ENCODE measurements at regions of chr3 and their contacts with region 1.

Region 1: DNA sequence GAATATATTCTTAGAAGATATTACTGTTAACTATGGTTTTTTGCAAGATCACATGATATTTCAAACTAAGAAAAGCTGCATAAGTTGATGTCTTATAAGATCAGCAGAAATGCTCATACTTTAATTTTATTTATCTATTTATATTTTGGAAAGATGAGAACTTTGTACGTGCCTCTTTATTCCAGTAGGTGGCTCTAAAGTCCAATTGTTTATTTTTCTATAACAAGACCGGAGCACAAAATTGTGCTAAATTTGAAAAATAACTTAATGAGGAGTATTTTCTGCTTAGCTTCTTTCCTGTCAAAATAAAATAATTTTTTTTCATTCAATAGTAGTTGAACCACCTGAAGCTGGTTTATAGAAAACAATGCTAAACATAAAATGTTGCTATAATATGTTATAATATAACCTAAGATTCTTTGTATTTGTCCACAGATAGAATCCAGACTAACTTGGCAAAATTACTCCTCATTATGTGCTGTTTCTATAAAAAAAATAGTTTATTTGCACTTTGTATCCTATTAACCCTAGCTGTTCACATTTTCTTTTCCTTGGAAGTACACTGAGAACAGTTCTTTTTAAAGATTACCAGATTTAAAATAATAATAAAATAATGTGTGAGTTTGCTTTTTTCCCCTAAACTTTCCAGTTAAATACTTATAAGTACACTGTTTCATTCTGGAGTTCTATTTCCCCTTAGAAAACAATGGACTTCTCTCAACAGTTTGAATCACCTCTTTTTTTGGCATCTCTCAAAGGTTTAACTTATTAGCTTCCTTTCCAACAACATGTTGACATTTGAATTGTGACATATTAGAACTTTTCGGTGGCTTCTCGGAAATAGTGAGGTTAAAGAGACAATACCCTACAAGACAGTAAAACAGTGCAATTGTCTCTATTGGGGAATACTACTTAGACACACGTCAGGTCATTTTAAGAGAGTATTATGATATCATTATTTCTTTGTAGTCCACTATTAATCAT is 530.0 kb downstream of the MECOM start:
- DNase-seq: peak; percentile 33
- H3K4me3 Mint-ChIP-seq: no peak overlapping the region
- H3K27ac Mint-ChIP-seq: peak overlapping the region; percentile 6
- H3K4me1 Mint-ChIP-seq: peaks cover 5% of the 10 kb centered on the region
- H3K27me3 Mint-ChIP-seq: no peaks in the 10 kb centered on the region
- CTCF ChIP-seq: peak; percentile 49

Region 2: DNA sequence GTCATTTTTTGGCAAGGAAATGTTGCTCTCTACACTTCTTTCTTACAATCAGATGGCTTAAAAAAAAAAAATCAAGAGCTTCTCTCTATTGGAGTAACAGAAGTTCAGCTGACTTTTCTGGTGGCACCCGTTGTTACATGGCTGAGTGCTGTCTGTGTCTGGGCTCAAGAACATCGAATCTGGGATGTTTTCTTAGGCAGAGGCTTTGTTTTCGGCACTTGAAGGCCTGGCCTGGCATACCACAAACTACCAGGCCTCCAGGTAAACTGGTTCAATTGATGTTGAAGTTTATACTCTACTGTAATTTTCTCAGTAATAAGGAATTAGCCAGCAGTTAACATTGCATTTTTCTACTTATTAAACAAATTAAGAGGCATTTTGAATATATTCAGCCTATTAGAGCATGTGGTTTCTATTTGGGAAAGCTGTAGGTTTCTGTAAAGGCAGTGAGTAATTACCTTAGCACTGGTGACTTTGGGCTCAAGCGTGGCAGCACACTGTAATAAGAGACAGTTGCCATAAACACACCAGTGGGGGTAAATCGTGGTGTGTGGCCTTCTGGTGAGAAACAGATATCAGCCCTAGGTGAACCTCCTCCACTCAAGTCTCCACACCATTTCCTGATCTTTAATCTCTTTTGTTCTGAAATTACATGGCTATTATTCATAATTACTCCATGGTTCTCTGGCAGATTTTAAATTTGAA is 14.7 kb before region 1 on chr3:
- CTCF ChIA-PET with region 1: interaction called, 12 read pairs
- POLR2A ChIA-PET with region 1: no interaction called
- intact Hi-C with region 1: no loop called
- DNase-seq: no peak
- H3K4me3 Mint-ChIP-seq: no peak overlapping the region
- H3K27ac Mint-ChIP-seq: no peak overlapping the region
- H3K4me1 Mint-ChIP-seq: no peaks in the 10 kb centered on the region
- H3K27me3 Mint-ChIP-seq: no peaks in the 10 kb centered on the region
- CTCF ChIP-seq: no peak

Region 3: GRCh38 chr3:169390271-169391230 is 257.1 kb after region 1 on chr3:
- CTCF ChIA-PET with region 1: interaction called, 10 read pairs
- POLR2A ChIA-PET with region 1: no interaction called
- intact Hi-C with region 1: no loop called
- DNase-seq: peak; percentile 21
- H3K4me3 Mint-ChIP-seq: no peak overlapping the region
- H3K27ac Mint-ChIP-seq: no peak overlapping the region
- H3K4me1 Mint-ChIP-seq: no peaks in the 10 kb centered on the region
- H3K27me3 Mint-ChIP-seq: no peaks in the 10 kb centered on the region
- CTCF ChIP-seq: peak; percentile 9

Region 4: DNA sequence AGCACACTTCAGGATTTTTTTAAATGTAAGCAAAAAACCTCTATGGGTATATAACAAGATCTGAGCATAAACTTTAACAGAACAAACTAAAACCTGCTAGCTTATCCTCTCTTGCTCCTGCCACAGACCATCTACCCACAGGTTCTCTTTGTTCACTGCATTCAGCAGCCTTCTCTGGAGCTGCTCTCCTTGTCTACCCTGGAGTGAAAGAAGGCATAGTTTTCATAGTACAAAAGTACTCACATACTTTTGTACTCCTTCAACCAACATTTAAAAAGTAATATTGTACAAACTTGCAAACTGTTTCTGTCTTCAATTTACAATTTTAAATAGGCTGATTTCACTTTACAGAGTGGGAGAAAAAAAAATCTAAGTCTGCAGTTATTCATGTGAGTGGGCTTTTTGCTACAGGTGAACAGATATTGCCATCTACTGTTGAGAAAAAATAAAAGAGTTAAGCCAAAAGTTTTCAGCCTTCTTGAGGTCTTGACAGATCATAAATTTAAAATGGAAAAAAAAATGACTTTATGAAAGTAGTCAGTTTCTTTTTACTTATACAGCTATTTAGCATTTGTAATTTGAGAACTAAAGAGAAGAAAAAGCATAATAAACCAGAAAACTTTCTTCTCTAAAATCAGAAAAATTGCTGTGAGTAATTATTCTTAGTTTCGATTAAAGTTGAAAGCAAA is 611.0 kb after region 1 on chr3:
- CTCF ChIA-PET with region 1: interaction called, 10 read pairs
- POLR2A ChIA-PET with region 1: no interaction called
- intact Hi-C with region 1: loop called (anchors 1 kb)
- DNase-seq: no peak
- H3K4me3 Mint-ChIP-seq: no peak overlapping the region
- H3K27ac Mint-ChIP-seq: no peak overlapping the region
- H3K4me1 Mint-ChIP-seq: peaks cover 9% of the 10 kb centered on the region
- H3K27me3 Mint-ChIP-seq: no peaks in the 10 kb centered on the region
- CTCF ChIP-seq: peak; percentile 24